Left ventricle myocardium superior (tissue), 1 donor: ENCODE measurements at regions of chr20 and their contacts with region 1.

Region 1: DNA sequence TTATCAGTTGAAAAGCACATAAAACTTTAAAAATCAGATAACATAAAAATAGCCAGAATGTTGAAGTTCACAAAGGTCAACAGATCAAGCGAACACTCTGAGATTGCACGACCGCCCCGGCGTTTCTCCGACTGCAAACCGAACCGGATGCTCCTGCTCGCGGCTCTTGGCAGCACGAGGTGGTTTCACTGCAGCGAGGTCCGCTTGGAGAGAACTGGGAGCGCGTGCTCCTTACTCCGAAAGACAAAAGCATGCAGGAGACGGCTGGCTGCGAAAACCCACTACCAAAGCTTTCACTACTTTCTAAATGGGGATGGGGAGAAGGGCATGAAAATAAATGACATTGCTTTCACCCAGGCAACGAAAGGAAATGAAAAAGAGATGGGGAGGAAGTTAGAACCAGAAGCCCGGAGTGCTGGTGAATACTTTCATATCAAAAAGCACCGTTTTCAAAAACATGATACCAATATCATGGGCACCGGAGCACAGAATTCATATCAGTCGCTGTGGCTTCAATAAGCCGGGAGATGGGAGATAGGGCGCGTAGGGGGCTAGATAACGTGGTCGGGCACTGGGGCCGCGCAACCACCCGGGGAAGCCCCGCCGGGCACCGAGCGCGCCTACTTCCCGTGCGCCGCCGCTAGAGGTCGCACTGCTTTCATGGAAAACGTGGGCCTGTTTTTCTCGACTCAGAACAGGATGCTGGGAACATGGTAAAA is 8.3 kb upstream of the ANKRD60 start:
- DNase-seq: peak; percentile 83
- ATAC-seq: peak; percentile 95

Region 2: GRCh38 chr20:57282670-57283361 is 954.0 kb before region 1 on chr20:
- intact Hi-C with region 1: no loop called
- DNase-seq: no peak
- ATAC-seq: no peak

Region 3: GRCh38 chr20:58309575-58310290 is 73.0 kb after region 1 on chr20 and contains the start of gene RAB22A:
- intact Hi-C with region 1: no loop called
- DNase-seq: peak; percentile 92
- ATAC-seq: peak; percentile 93
- total RNA-seq, gene RAB22A: 7.0 TPM

Region 4: GRCh38 chr20:58447511-58448391 is 211.0 kb after region 1 on chr20:
- intact Hi-C with region 1: loop called (anchors 10 kb)
- DNase-seq: no peak
- ATAC-seq: peak; percentile 68

Region 5: DNA sequence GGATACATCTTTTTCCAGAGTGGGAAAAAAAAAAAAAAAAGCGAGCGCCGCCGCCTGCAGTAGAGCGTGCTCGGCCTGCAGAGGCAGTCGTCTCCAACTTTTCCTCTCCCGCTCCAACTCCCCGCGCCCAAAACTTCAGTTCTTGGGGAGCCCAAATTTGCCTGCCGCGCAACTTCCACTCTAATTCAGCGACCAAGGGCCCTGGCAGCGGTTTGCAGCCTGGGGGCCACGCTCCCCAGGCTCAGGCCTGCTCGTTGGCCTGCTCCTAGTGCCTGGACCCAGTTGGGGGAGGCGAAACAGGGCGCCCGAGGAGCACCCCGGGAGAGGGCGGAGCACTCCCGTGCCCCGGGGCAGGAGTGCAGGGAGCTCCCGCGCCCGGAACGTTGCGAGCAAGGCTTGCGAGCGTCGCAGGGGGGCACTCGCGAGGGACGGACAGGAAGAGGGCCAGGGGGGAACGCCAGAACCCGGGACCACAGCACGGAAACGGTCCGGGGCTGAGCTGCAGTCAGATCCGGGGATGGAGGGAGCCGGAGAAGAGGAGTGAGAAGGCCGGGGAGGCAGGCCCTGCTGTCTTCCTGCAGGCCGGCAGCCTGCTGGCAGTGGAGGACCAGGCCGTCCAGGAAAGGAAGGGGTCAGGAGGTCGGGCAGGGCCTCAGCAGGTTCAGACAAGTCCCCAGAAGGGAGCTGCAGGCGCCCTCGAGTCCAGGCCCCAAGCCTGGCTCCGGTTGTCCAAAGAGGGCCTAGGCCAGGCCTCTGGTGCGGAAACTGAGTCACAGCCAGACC is 414.2 kb after region 1 on chr20 and contains the start of gene STX16:
- intact Hi-C with region 1: loop called (anchors 10 kb)
- DNase-seq: peak; percentile 94
- ATAC-seq: peak; percentile 97
- total RNA-seq, gene STX16: 24.8 TPM